Gastrocnemius medialis (tissue), 4 donors: ENCODE measurements at regions of chrX and their contacts with region 1.

Region 1: DNA sequence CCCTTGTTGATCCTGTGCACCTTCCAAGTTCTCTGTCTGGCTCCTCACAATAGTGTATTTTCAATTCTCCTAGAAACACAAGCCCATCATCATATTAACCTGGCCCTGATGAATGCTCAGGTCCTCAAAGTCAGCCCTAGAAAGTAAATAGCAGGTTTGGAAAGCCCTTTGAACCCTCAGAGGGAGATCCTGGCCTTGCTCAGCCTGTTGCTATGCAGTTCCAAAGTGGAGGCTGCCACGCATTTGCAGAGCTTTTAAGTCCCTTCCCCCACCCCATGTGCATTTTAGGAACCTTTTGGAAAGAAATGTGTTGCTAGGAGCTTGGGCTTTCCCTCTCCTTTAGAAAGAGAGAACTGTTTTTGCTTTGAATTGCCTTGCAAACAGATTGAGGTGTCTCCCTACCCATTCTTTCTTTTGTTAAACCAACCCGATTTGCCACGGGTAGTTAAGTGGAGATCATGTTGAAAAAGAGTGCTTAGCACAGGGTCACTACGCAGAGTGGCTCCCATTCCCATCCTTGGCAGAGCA is 12.2 kb downstream of the MAMLD1 start:
- DNase-seq: no peak
- ATAC-seq: no peak
- H3K4me3 ChIP-seq: no peak overlapping the region
- H3K27ac ChIP-seq: no peak overlapping the region
- H3K4me1 ChIP-seq: no peaks in the 10 kb centered on the region
- H3K27me3 ChIP-seq: no peaks in the 10 kb centered on the region
- CTCF ChIP-seq: no peak
- POLR2A ChIP-seq: no peak

Region 2: GRCh38 chrX:150486011-150486410 is 110.7 kb after region 1 on chrX:
- in situ Hi-C with region 1: loop called in 1 of 4 experiments (anchors 25 kb)
- intact Hi-C with region 1: no loop called
- DNase-seq: peak in 1 of 2 donors; percentile 46
- ATAC-seq: peak; percentile 79 to 88
- H3K4me3 ChIP-seq: no peak overlapping the region
- H3K27ac ChIP-seq: no peak overlapping the region
- H3K4me1 ChIP-seq: no peaks in the 10 kb centered on the region
- H3K27me3 ChIP-seq: no peaks in the 10 kb centered on the region
- CTCF ChIP-seq: peak; percentile 27 to 61 (median 47)
- POLR2A ChIP-seq: no peak